Activated B cell treated with CpG ODN at 0.5 μM for 24 hours (primary cell): ENCODE measurements at regions of chr3 and their contacts with region 1.

Region 1: DNA sequence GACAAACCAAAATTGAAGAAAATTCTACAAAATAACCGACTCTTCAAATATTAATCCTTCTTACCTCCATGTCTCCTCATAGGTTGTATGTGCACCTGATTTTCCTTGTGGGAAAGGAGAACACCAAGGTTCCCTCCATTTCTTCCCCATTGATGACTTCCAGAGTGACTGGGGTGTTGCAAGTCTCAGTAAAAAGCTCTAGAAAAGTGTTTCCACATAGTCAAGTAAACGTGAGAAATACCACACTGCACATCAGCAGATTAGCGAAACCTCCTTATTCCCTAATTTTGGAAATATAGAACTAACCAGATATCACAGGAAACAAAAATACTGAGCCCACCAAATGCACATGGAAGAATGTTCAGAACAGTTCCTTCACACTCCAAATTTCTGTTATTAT is 4.9 kb upstream of the RPN1 start:
- DNase-seq: no peak
- ATAC-seq: no peak
- H3K4me3 Mint-ChIP-seq: peak overlapping the region; percentile 9
- H3K27ac Mint-ChIP-seq: no peak overlapping the region
- H3K4me1 Mint-ChIP-seq: peaks cover 10% of the 10 kb centered on the region
- H3K27me3 Mint-ChIP-seq: no peaks in the 10 kb centered on the region
- CTCF ChIP-seq: no peak

Region 2: DNA sequence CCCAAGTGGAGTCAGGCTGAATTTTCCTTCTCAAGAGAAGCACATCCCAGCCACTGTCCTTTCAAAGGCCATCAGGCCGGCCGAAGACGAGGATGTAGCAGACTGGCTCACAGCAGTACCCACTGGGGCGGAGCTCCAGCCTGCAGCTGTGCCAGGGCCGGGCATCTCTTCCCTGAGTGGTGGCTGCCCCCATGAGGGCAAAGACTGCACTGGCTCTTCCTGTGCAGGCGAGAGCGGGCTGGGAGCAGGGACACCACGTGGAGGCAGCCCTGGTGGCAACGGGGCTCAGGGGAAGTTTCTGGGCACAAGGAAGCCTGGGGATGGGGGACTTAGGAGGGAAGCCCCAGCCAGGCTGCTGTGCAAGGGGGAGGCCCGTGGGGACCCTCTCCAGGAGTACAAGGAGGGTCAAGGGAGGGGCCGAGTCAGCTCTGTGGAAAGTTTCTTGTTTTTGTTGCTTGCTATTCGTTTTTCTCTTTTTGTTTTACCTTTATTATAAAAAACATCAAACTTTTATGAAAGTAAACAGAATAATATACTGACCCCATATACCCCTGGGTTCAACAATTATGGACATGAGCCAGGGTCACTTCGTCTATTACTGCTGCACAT is 71.0 kb before region 1 on chr3:
- CTCF ChIA-PET with region 1: no interaction called
- POLR2A ChIA-PET with region 1: no interaction called
- intact Hi-C with region 1: no loop called
- DNase-seq: no peak
- ATAC-seq: peak; percentile 80
- H3K4me3 Mint-ChIP-seq: no peak overlapping the region
- H3K27ac Mint-ChIP-seq: no peak overlapping the region
- H3K4me1 Mint-ChIP-seq: no peaks in the 10 kb centered on the region
- H3K27me3 Mint-ChIP-seq: peaks cover 11% of the 10 kb centered on the region
- CTCF ChIP-seq: no peak

Region 3: DNA sequence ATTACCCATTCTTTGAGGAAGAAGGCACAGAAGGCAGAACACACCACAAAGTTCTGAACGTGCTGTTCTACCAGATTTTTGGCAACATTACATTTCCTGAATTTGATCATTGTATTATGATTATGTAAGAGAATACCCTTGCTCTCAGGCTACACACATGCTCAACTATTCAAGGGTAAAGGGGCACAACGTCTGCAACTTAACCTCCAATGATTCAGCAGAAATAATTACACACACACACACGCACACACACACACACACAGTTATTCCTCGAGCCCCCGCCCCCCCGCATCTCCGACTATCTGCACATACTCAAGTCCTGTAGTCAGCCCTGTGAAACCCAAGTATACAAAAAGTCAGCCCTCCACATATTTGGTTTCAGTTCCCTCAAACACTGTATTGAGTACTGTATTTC is 31.8 kb before region 1 on chr3:
- CTCF ChIA-PET with region 1: no interaction called
- POLR2A ChIA-PET with region 1: interaction called, 8 read pairs
- intact Hi-C with region 1: loop called (anchors 1 kb)
- DNase-seq: no peak
- ATAC-seq: peak; percentile 56
- H3K4me3 Mint-ChIP-seq: no peak overlapping the region
- H3K27ac Mint-ChIP-seq: no peak overlapping the region
- H3K4me1 Mint-ChIP-seq: peaks cover 19% of the 10 kb centered on the region
- H3K27me3 Mint-ChIP-seq: no peaks in the 10 kb centered on the region
- CTCF ChIP-seq: no peak

Region 4: GRCh38 chr3:128667641-128668040 is 12.1 kb after region 1 on chr3:
- CTCF ChIA-PET with region 1: no interaction called
- POLR2A ChIA-PET with region 1: no interaction called
- intact Hi-C with region 1: no loop called
- DNase-seq: no peak
- ATAC-seq: no peak
- H3K4me3 Mint-ChIP-seq: no peak overlapping the region
- H3K27ac Mint-ChIP-seq: no peak overlapping the region
- H3K4me1 Mint-ChIP-seq: peaks cover 6% of the 10 kb centered on the region
- H3K27me3 Mint-ChIP-seq: no peaks in the 10 kb centered on the region
- CTCF ChIP-seq: no peak

Region 5: GRCh38 chr3:128794770-128795649 is 139.5 kb after region 1 on chr3:
- CTCF ChIA-PET with region 1: no interaction called
- POLR2A ChIA-PET with region 1: no interaction called
- intact Hi-C with region 1: no loop called
- DNase-seq: no peak
- ATAC-seq: peak; percentile 100
- H3K4me3 Mint-ChIP-seq: no peak overlapping the region
- H3K27ac Mint-ChIP-seq: peak overlapping the region; percentile 30
- H3K4me1 Mint-ChIP-seq: peaks cover 50% of the 10 kb centered on the region
- H3K27me3 Mint-ChIP-seq: no peaks in the 10 kb centered on the region
- CTCF ChIP-seq: no peak